RWPE1 (cell line): ENCODE measurements at regions of chr11 and their contacts with region 1.

Region 1: GRCh38 chr11:3091791-3092602 is 34.8 kb upstream of the CARS1 start:
- DNase-seq: peak; percentile 90
- H3K27ac ChIP-seq: peak overlapping the region; percentile 15; the same call in 1 of the 2 replicates
- CTCF ChIP-seq: peak; percentile 98

Region 2: GRCh38 chr11:2930704-2931428 is 161.1 kb before region 1 on chr11:
- CTCF ChIA-PET with region 1: interaction called, 16 read pairs
- POLR2A ChIA-PET with region 1: no interaction called
- DNase-seq: peak; percentile 85
- H3K27ac ChIP-seq: peak overlapping the region; percentile 95
- CTCF ChIP-seq: peak; percentile 94

Region 3: DNA sequence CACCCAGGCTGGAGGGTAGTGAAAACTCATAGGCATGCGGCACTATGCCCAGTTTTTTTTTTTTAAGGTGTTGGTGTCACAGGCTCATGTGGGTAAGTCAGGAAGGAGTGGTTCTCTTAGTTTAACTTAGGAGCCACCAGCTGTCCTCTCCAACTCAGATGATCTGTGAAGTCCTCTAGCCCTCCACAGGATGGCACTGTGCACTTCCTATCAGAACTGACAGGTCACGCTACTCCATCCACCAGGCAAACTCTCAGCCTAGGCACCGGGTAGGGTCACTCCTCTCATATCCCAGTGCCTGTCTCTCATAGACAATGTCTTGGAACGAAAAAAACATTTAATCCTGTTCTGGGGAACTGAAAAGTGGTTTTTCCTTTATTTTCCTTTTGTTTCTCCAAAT is 116.4 kb before region 1 on chr11:
- CTCF ChIA-PET with region 1: interaction called, 10 read pairs
- POLR2A ChIA-PET with region 1: no interaction called
- DNase-seq: peak; percentile 45
- H3K27ac ChIP-seq: no peak overlapping the region
- CTCF ChIP-seq: peak; percentile 25

Region 4: DNA sequence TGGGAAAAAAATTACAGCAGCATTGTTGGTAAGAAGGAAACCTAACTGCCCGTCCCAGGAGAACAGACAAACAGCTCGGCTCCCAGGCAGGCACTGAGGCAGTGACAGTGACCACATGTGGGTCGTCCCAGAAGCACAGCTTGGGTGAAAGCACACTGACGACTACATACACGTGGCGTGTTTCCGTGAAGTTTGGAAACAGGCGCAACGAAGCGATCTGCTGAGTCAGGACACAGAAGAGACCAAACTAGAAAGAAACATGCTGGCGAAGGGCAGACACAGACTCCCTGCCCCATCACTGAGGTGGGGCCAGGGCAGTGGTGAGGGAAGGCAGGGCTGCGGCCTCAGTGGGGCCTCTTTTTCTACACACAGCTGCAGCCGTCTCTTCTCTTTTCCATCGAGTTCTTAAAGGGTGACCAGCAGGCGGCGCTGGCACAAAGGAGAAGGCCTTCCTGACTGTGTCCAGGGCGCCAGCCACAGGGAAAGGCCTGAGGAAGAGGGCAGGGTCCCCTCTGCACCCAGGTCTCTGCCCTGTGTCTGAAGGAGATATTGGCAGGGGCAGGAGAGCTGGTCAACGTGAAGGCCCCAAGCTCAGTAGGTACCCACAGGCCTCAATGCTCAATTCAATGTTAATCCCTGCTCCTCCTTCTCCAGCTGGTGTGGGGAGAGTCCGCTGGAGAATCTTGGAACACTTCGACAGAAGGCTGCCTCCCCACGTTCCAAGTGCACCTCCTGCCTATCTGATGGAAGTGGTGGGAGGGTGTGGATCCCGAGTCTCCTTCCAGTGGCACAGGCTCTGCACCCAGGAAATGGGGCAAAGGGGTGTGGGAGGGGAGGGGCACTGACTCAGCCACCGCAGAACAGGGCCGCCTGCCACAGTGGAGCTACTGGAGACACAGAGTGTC is 54.7 kb before region 1 on chr11:
- CTCF ChIA-PET with region 1: interaction called, 27 read pairs
- POLR2A ChIA-PET with region 1: no interaction called
- DNase-seq: peak; percentile 71
- H3K27ac ChIP-seq: peak overlapping the region; percentile 85
- CTCF ChIP-seq: peak; percentile 79

Region 5: DNA sequence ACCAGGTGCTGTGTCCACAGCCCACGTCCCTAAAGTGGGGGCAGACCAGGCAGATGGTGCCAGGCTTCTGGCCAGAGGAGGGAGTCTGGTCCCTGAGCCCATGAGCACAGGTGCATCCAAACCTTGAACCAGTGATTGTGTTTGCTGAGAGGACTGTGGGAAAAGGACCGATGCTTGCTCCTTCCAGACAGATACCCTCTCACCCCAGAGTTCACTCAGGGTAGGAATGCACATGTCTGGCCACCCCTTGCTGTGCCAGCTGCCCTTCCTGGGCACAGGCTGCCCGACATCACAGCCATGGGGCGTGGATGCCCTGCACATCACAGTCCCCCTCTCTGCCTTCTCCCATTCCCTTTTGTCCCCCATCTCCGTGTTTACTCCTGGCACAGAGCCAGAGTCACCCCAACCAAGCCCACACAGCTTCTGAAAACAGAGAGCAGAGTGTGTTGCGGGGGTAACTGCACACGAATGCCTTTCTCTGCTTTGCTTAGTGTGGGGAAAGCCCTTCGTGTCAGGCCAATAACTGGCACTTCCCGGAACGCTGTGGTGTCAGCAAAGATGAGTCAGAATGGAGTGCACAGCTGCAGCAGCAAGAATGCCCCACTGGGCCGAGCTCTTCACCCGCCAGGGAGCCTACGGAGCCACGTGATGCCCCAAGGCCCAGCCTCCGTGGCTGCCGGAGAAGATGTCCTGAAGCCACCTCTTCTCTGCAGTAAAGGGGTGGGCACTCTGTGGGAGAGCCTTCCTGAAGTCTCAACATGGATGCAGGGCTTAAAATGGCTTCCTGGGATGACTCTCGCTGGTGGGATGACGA is 42.4 kb before region 1 on chr11:
- CTCF ChIA-PET with region 1: interaction called, 40 read pairs
- POLR2A ChIA-PET with region 1: no interaction called
- DNase-seq: peak; percentile 91
- H3K27ac ChIP-seq: peak overlapping the region; percentile 87
- CTCF ChIP-seq: peak; percentile 65

Region 6: GRCh38 chr11:3153291-3153861 is 61.4 kb after region 1 on chr11:
- CTCF ChIA-PET with region 1: no interaction called
- POLR2A ChIA-PET with region 1: no interaction called
- DNase-seq: no peak
- H3K27ac ChIP-seq: no peak overlapping the region
- CTCF ChIP-seq: no peak